ENCODE measurements at regions of chr2 and their contacts with region 1.

Region 1: GRCh38 chr2:140567734-140568133 is 1563.1 kb downstream of the LRP1B start:
- DNase-seq: no peak
- H3K4me3 ChIP-seq: no peak overlapping the region
- H3K27ac ChIP-seq: no peak overlapping the region
- H3K4me1 ChIP-seq: 0 out of 7 replicates have a peak, but pooled peaks cover 0 to 2% (median 0%) of the 10 kb centered on the region in 4 experiments
- H3K27me3 ChIP-seq: no peaks in the 10 kb centered on the region
- CTCF ChIP-seq: no peak
- EP300 ChIP-seq: no peak
- POLR2A ChIP-seq: no peak
- RAD21 ChIP-seq: no peak

Region 2: GRCh38 chr2:140586379-140586778 is 18.6 kb after region 1 on chr2:
- CTCF ChIA-PET with region 1: interaction called, 12 read pairs
- POLR2A ChIA-PET with region 1: no interaction called
- DNase-seq: peak in 1 of 2 experiments; percentile 65
- H3K4me3 ChIP-seq: no peak overlapping the region
- H3K27ac ChIP-seq: no peak overlapping the region
- H3K4me1 ChIP-seq: no peaks in the 10 kb centered on the region
- H3K27me3 ChIP-seq: no peaks in the 10 kb centered on the region
- CTCF ChIP-seq: peak; percentile 59 to 87 (median 82)
- EP300 ChIP-seq: no peak
- POLR2A ChIP-seq: no peak
- RAD21 ChIP-seq: peak; percentile 71

Region 3: DNA sequence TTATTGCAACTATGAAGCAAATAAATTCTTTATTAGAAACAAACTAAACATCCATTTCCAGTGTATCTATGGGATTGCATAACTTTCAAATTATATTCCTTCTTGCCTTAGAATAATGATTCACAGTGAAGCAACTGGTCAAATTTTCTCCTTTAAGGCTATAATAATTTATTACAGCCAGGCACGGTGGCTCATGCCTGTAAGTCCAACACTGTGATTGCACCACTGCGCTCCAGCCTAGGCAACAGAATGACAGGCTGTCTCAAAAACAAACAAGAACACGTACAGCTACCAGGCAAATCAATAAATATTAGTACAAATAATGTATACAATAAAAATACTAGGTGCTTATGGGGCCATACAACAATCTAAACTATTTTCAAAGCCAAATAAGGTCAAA is 146.9 kb after region 1 on chr2:
- CTCF ChIA-PET with region 1: no interaction called
- POLR2A ChIA-PET with region 1: no interaction called
- DNase-seq: no peak
- H3K4me3 ChIP-seq: no peak overlapping the region
- H3K27ac ChIP-seq: no peak overlapping the region
- H3K4me1 ChIP-seq: no peaks in the 10 kb centered on the region
- H3K27me3 ChIP-seq: no peaks in the 10 kb centered on the region
- CTCF ChIP-seq: no peak
- EP300 ChIP-seq: no peak
- POLR2A ChIP-seq: no peak
- RAD21 ChIP-seq: no peak